Lower lobe of right lung (tissue), 2 donors: ENCODE measurements at regions of chr20 and their contacts with region 1.

Region 1: DNA sequence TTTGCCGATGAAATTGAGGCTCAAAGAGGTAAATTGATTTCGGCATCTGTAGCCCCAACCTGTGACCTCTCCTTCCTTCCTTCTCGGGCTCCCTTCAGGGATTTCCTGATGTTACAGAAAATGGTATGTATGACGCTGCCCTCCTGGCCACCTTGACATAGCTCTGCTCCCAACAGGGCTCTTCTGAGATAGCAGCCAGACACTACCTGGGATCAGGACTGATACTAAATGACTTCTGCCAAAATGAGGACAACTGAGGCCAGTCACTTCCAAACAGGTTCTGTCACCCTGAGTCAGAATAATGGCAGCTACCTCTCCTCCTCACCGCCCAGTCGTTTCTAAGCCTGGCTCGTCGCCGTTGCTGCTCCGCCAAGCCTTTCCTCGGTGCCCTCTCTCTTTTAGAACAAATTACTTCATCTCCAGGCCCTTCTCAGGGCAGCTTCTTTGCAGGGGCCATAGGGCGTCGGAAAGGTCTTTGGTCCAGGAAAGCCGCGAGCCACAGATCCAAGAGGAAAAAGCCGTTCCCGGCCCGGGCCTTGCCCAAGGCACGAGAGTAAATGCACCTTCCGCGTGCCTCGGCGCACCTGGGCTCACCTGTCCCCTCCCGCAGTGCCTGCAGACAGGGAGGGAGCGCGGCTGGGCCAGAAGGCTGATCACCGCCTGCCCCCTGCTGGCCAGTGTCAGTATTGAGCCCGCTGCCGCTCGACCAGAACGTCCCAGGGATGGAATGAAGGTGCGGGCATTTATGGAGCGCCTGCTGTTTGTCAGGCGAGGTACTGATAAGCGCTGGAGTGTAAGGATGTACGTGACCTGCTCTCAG is 904 bp upstream of the LPIN3 start:
- DNase-seq: peak; percentile 92
- ATAC-seq: peak; percentile 92 to 95
- H3K4me3 ChIP-seq: peak overlapping the region; percentile 59
- H3K27ac ChIP-seq: peak overlapping the region; percentile 79
- H3K4me1 ChIP-seq: peaks cover 23% of the 10 kb centered on the region
- H3K27me3 ChIP-seq: no peaks in the 10 kb centered on the region
- CTCF ChIP-seq: peak; percentile 99

Region 2: DNA sequence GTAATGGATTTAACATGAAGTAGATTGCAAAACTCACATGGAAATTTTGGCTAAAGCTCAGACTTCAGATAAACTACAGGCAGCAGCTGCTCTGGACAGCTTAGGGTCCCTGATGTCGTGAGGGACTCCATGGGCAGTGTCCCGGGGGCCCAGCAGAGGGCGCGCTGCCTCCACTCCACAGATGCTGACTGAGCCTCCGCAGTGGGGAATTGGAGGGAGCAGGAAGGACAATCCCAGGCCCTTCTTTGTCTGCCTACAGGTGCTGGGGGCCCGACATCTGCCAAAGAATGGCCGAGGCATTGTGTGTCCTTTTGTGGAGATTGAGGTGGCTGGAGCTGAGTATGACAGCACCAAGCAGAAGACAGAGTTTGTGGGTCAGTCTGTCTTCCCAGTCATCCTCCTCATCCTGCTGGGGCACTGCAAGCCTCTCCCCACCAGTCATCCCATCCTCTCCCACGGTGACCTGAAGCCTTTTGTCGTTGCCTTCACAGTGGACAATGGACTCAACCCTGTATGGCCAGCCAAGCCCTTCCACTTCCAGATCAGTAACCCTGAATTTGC is 166.5 kb before region 1 on chr20:
- intact Hi-C with region 1: loop called (anchors 5 kb)
- DNase-seq: peak; percentile 80
- ATAC-seq: peak; percentile 89 to 90
- H3K4me3 ChIP-seq: no peak overlapping the region
- H3K27ac ChIP-seq: peak overlapping the region; percentile 68
- H3K4me1 ChIP-seq: peaks cover 46% of the 10 kb centered on the region
- H3K27me3 ChIP-seq: no peaks in the 10 kb centered on the region
- CTCF ChIP-seq: peak; percentile 94